K562 (cell line): ENCODE measurements at regions of chr4 and their contacts with region 1.

Region 1: GRCh38 chr4:150679765-150680343 is 97.9 kb downstream of the MAB21L2 start:
- DNase-seq: no peak
- ATAC-seq: no peak; the same call in 1 of the 3 replicates
- H3K4me3 ChIP-seq: no peak overlapping the region
- H3K27ac ChIP-seq: no peak overlapping the region
- H3K4me1 ChIP-seq: no peaks in the 10 kb centered on the region
- H3K27me3 ChIP-seq: no peaks in the 10 kb centered on the region
- CTCF ChIP-seq: no peak
- EP300 ChIP-seq: no peak
- POLR2A ChIP-seq: no peak
- RAD21 ChIP-seq: no peak

Region 2: GRCh38 chr4:148874331-148874730 is 1805.5 kb before region 1 on chr4:
- CTCF ChIA-PET with region 1: no interaction called
- POLR2A ChIA-PET with region 1: no interaction called
- in situ Hi-C with region 1: no loop called
- intact Hi-C with region 1: no loop called
- DNase-seq: no peak
- ATAC-seq: no peak
- H3K4me3 ChIP-seq: no peak overlapping the region
- H3K27ac ChIP-seq: no peak overlapping the region
- H3K4me1 ChIP-seq: no peaks in the 10 kb centered on the region
- H3K27me3 ChIP-seq: no peaks in the 10 kb centered on the region
- CTCF ChIP-seq: no peak
- EP300 ChIP-seq: no peak
- POLR2A ChIP-seq: no peak
- RAD21 ChIP-seq: no peak

Region 3: DNA sequence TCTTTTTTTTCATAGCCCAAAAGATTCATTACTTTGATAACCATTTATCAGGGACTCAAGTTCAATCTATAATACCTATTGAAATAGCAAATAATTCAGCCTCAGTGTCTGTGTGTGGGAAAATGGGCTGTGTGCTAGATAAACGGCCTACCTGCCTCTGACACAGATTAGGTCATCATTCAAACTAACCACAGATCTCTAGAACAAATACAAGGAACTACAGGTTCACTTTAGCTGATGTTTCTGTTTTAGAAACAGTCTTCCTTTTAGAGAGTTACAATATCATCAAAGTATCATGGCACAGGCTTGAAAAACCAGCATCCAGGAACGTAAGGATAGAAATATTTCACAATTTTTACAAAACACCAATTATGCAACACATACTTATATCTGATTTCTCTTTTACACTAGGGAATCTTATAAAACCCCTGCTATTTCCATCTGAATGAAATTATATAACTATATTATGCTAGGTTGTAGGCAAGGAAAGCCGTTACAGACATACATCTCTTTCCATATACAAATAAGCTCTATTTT is 154.5 kb before region 1 on chr4:
- CTCF ChIA-PET with region 1: no interaction called
- POLR2A ChIA-PET with region 1: no interaction called
- in situ Hi-C with region 1: loop called (anchors 10 kb)
- intact Hi-C with region 1: no loop called
- DNase-seq: no peak
- ATAC-seq: no peak
- H3K4me3 ChIP-seq: no peak overlapping the region
- H3K27ac ChIP-seq: no peak overlapping the region
- H3K4me1 ChIP-seq: no peaks in the 10 kb centered on the region
- H3K27me3 ChIP-seq: no peaks in the 10 kb centered on the region
- CTCF ChIP-seq: no peak
- EP300 ChIP-seq: no peak
- POLR2A ChIP-seq: no peak
- RAD21 ChIP-seq: no peak